Activated CD4-positive, alpha-beta T cell treated with anti-CD3 and anti-CD28 coated beads for 36 hours (primary cell): ENCODE measurements at regions of chr14 and their contacts with region 1.

Region 1: DNA sequence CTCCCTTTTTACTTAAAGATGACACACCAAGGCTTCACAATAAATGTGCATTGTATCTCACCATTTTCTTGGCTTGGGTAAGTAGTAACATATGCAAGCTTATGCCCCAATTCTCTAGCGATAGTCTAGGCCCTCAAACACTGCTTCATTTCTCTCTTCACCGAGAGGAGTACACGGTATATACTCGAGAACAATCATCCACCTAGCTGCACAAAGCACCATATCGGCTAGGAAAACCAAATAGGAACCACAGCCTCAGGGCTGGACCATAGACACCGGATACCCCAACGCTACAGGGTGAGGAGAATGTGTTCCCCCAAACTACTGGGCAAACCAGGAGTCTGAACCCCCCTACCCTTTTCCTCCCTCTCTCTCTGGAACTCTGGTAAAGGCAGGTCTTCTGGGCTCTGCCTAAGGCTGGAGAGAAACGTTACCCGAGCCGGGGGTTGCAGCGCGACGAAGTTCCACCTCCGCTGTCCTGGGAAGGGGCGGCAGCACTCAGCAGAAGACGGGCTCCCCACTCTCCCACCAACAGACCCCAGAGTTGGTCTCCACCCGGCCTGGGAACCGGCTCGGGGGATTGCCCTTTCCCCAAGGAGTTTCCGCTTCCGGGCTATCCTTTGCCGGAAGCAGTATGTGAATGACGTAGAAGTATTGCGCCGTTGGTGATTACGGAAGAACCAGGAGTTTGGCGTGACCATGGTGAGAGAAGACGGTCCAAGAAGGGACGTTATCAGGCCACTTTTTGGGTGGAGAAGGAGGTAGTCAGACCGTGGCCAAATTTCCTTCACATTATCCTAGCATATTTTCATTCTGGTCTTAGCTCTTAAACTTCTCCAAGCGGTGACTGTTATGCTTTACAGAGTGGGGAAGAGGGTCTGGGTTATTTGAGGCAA is at the starts of genes AREL1 and FCF1:
- DNase-seq: peak; percentile 88
- ATAC-seq: peak; percentile 98
- H3K4me3 Mint-ChIP-seq: peak within 1 kb of the TSS; percentile 98
- H3K27ac Mint-ChIP-seq: peak within 1 kb of the TSS; percentile 98
- H3K4me1 Mint-ChIP-seq: peaks cover 50% of the 10 kb centered on the region
- H3K27me3 Mint-ChIP-seq: no peaks in the 10 kb centered on the region
- total RNA-seq, gene AREL1: 31.3 to 35.6 TPM
- total RNA-seq, gene FCF1: 87.7 to 112 TPM

Region 2: GRCh38 chr14:74018586-74019407 is 694.0 kb before region 1 on chr14 and contains the starts of genes BBOF1 and ENTPD5:
- CTCF ChIA-PET with region 1: no interaction called
- POLR2A ChIA-PET with region 1: no interaction called
- intact Hi-C with region 1: loop called in 1 of 2 experiments (anchors 2 kb)
- DNase-seq: peak; percentile 90
- ATAC-seq: peak; percentile 93
- H3K4me3 Mint-ChIP-seq: peak within 1 kb of the TSS; percentile 80
- H3K27ac Mint-ChIP-seq: peak within 1 kb of the TSS; percentile 93
- H3K4me1 Mint-ChIP-seq: peaks cover 12% of the 10 kb centered on the region
- H3K27me3 Mint-ChIP-seq: no peaks in the 10 kb centered on the region
- total RNA-seq, gene BBOF1: 1.9 to 2.1 TPM
- total RNA-seq, gene ENTPD5: 8.7 to 10.0 TPM

Region 3: GRCh38 chr14:74302634-74303577 is 409.8 kb before region 1 on chr14 and contains the start of gene ABCD4:
- CTCF ChIA-PET with region 1: no interaction called
- POLR2A ChIA-PET with region 1: no interaction called
- intact Hi-C with region 1: loop called in 1 of 2 experiments (anchors 1 kb)
- DNase-seq: peak; percentile 91
- ATAC-seq: peak; percentile 95
- H3K4me3 Mint-ChIP-seq: peak within 1 kb of the TSS; percentile 98
- H3K27ac Mint-ChIP-seq: peak within 1 kb of the TSS; percentile 98
- H3K4me1 Mint-ChIP-seq: peaks cover 32% of the 10 kb centered on the region
- H3K27me3 Mint-ChIP-seq: no peaks in the 10 kb centered on the region
- total RNA-seq, gene ABCD4: 43.0 to 43.1 TPM

Region 4: DNA sequence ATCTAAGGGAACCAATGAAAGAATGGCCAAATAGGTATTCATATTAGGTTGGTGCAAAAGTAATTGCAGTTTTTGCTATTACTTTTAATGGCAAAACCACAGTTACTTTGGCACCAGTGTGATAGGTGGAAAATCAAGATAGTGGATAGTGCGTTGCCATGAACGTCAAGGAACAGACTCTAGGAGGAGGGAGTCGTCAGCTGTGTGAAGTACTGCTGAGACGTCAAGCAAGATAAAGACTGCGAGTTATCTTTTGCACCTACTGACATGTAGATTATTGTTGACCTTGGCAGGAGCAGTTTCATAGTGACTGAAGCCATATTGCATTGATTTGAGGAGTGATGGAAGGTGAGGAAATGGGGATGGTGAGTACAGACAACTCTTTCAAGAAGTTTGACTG is 58.7 kb after region 1 on chr14:
- CTCF ChIA-PET with region 1: no interaction called
- POLR2A ChIA-PET with region 1: no interaction called
- intact Hi-C with region 1: no loop called
- DNase-seq: no peak
- ATAC-seq: no peak
- H3K4me3 Mint-ChIP-seq: no peak overlapping the region
- H3K27ac Mint-ChIP-seq: no peak overlapping the region
- H3K4me1 Mint-ChIP-seq: peaks cover 48% of the 10 kb centered on the region
- H3K27me3 Mint-ChIP-seq: no peaks in the 10 kb centered on the region

Region 5: DNA sequence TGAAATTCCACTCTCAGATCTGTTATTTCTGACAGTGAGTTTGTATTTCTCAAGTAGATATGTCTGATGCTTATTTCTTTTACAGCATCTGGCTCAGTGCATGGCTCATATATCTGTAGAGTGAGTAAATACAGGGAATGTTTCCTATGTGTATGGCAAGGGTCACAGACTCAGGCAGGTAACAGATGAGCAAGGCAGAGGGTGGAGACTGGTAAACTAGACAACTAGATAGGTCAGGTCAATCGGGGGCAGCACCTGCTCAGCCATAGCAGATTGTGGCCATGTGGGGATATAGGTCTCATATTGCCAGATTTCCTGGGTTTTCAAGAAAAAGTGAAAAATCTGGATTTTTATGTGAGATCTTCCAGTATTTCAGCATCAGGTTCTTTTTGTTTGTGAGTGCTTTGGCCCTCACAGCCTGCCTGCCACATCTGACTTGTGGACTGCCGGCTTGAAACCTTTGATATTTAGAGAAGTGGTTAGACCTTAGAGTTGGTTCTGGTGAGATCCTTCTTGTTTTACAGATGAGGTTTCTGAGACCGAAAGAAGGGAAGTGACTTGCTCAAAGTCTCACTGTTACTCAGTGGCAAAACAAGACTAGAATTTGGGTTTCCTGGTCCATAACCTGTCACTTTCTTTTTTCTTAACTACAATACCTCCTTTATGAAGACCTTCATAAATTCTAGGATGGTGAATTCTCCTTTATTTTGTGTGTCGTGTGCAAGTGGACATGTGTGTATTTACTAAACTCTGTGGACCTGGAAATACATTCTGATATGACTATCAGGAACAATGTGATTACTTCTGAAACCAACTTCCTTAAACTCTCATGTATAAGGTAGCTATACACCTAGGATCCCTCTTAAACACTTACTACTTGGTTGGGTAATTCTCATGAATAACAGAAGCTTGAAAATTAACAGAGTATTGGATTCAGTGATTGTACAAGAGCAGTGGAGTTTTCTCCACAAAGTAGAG is 128.8 kb after region 1 on chr14:
- CTCF ChIA-PET with region 1: no interaction called
- POLR2A ChIA-PET with region 1: no interaction called
- intact Hi-C with region 1: loop called in 1 of 2 experiments (anchors 5 kb)
- DNase-seq: peak; percentile 49
- ATAC-seq: peak; percentile 81
- H3K4me3 Mint-ChIP-seq: peak overlapping the region; percentile 24
- H3K27ac Mint-ChIP-seq: peak overlapping the region; percentile 80
- H3K4me1 Mint-ChIP-seq: peaks cover 59% of the 10 kb centered on the region
- H3K27me3 Mint-ChIP-seq: no peaks in the 10 kb centered on the region

Region 6: DNA sequence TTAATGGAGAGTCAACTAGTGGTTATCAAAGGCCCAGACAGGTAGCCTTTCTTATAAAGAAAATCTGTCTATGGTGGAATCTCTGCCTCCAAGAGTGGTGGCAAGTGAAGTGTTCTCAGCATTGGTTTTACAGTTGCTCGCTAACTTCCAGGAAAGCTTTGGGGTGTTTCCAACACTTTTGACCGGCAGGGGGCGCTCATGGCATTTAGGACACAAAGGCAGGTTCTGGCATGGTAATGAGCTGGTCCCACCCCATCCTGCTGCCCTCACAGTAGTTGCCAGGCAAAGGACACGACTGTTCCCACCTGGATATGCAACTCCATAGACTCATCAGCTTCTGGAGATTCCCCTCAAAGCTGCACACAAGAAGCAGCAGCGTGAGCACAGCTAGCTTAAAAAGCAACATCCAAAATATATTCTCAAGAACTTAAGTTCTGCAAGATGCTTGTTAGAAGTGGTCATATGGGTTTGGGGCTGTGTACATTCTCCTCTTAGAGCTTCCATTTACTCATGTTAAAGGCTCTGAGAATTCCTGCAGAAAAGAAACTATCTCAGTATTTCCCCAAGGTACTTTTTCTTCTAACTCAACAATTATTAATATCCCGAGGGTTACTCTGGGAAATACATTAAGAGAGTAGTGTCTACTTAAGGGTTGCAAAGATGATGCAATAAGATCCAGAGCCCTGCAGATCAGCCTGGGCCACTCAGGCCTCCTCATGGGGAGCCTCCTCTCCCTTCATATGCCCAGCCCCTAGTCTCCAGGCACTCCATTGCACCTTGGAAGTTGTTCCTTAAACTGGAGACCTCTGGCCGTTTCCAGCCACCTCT is 148.4 kb after region 1 on chr14:
- CTCF ChIA-PET with region 1: no interaction called
- POLR2A ChIA-PET with region 1: no interaction called
- intact Hi-C with region 1: no loop called
- DNase-seq: peak; percentile 96
- ATAC-seq: peak; percentile 93
- H3K4me3 Mint-ChIP-seq: no peak overlapping the region
- H3K27ac Mint-ChIP-seq: no peak overlapping the region
- H3K4me1 Mint-ChIP-seq: peaks cover 7% of the 10 kb centered on the region
- H3K27me3 Mint-ChIP-seq: no peaks in the 10 kb centered on the region

Region 7: GRCh38 chr14:74881431-74882361 is 168.9 kb after region 1 on chr14 and contains the start of gene DLST:
- CTCF ChIA-PET with region 1: no interaction called
- POLR2A ChIA-PET with region 1: no interaction called
- intact Hi-C with region 1: loop called in 1 of 2 experiments (anchors 1 kb)
- DNase-seq: peak; percentile 92
- ATAC-seq: peak; percentile 89
- H3K4me3 Mint-ChIP-seq: peak within 1 kb of the TSS; percentile 99
- H3K27ac Mint-ChIP-seq: peak within 1 kb of the TSS; percentile 96
- H3K4me1 Mint-ChIP-seq: peaks cover 64% of the 10 kb centered on the region
- H3K27me3 Mint-ChIP-seq: no peaks in the 10 kb centered on the region
- total RNA-seq, gene DLST: 103 to 120 TPM